ENCODE measurements at regions of chr17 and their contacts with region 1.

Region 1: GRCh38 chr17:48307814-48308411 is 122.1 kb downstream of the SKAP1 start:
- DNase-seq: peak; percentile 63
- ATAC-seq: peak; percentile 74
- H3K4me3 Mint-ChIP-seq: no peak overlapping the region
- H3K27ac Mint-ChIP-seq: no peak overlapping the region
- H3K4me1 Mint-ChIP-seq: peaks cover 2% of the 10 kb centered on the region
- H3K27me3 Mint-ChIP-seq: no peaks in the 10 kb centered on the region

Region 2: GRCh38 chr17:48295362-48296288 is 12.3 kb before region 1 on chr17:
- CTCF ChIA-PET with region 1: interaction called, 14 read pairs
- POLR2A ChIA-PET with region 1: interaction called, 3 read pairs
- DNase-seq: no peak
- ATAC-seq: peak; percentile 68
- H3K4me3 Mint-ChIP-seq: peak overlapping the region; percentile 75
- H3K27ac Mint-ChIP-seq: peak overlapping the region; percentile 90
- H3K4me1 Mint-ChIP-seq: peaks cover 34% of the 10 kb centered on the region
- H3K27me3 Mint-ChIP-seq: no peaks in the 10 kb centered on the region

Region 3: GRCh38 chr17:48322060-48322459 is 14.1 kb after region 1 on chr17:
- CTCF ChIA-PET with region 1: interaction called, 12 read pairs
- POLR2A ChIA-PET with region 1: no interaction called
- DNase-seq: no peak
- ATAC-seq: no peak
- H3K4me3 Mint-ChIP-seq: no peak overlapping the region
- H3K27ac Mint-ChIP-seq: no peak overlapping the region
- H3K4me1 Mint-ChIP-seq: no peaks in the 10 kb centered on the region
- H3K27me3 Mint-ChIP-seq: no peaks in the 10 kb centered on the region

Measured in activated CD8-positive, alpha-beta T cell treated with anti-CD3 and anti-CD28 coated beads, Interleukin-2, amount 10 ng/mL, durations not matched to agents 7 days and 5 days (primary cell).